SK-N-SH (cell line): ENCODE measurements at regions of chr21 and their contacts with region 1.

Region 1: DNA sequence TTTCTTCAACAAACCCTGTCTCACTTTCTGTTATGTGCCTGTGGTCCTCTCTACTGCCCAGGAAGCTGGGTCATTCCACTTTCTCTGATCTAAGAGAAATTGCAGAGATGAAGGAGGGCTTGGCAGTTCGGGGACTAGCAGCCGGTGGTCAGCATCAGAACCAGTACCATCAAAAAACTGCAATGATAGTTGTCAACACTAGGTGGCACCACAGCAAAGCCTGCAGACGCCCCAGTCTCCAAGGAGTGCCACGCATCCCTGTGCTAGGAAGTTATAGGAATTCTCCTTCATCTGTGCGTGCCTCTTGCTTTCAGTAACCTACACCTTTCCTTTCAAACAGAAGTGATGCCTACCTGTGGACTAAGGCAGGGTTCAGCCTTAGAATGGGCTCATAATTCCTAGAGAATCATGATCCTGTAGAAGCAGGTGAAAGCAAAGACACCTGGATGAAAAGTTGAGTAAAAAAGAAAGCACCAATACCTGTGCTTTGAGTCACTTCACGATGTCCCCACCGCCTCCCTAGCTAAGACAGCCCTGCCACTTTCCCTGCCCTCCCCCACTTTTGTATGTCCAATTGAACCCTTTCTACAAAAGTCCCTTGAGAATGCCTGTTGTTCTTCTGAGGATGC is 129.2 kb downstream of the ADAMTS1 start:
- DNase-seq: peak; percentile 48
- H3K4me3 ChIP-seq: no peak overlapping the region
- H3K27ac ChIP-seq: no peak overlapping the region
- H3K4me1 ChIP-seq: no peaks in the 10 kb centered on the region
- H3K27me3 ChIP-seq: no peaks in the 10 kb centered on the region
- CTCF ChIP-seq: peak; percentile 79
- EP300 ChIP-seq: no peak
- RAD21 ChIP-seq: peak; percentile 58

Region 2: GRCh38 chr21:25881525-25882376 is 834.2 kb before region 1 on chr21:
- CTCF ChIA-PET with region 1: interaction called, 10 read pairs
- POLR2A ChIA-PET with region 1: no interaction called
- DNase-seq: peak; percentile 64
- H3K4me3 ChIP-seq: peak overlapping the region in 1 of 2 experiments; percentile 17; a peak in 2 of 4 replicates
- H3K27ac ChIP-seq: no peak overlapping the region; a peak in 1 of 4 replicates
- H3K4me1 ChIP-seq: no peaks in the 10 kb centered on the region
- H3K27me3 ChIP-seq: no peaks in the 10 kb centered on the region
- CTCF ChIP-seq: peak; percentile 97
- EP300 ChIP-seq: no peak
- RAD21 ChIP-seq: peak; percentile 87

Region 3: GRCh38 chr21:26732432-26733221 is 16.6 kb after region 1 on chr21:
- CTCF ChIA-PET with region 1: interaction called, 11 read pairs
- POLR2A ChIA-PET with region 1: interaction called, 3 read pairs
- DNase-seq: peak; percentile 14
- H3K4me3 ChIP-seq: no peak overlapping the region; a peak in 1 of 4 replicates
- H3K27ac ChIP-seq: no peak overlapping the region
- H3K4me1 ChIP-seq: peaks cover 0 to 3% of the 10 kb centered on the region in 2 experiments; a peak in 1 of 4 replicates
- H3K27me3 ChIP-seq: 0 out of 2 replicates have a peak, but pooled peaks cover 4% of the 10 kb centered on the region
- CTCF ChIP-seq: peak; percentile 64
- EP300 ChIP-seq: no peak
- RAD21 ChIP-seq: peak; percentile 47

Region 4: DNA sequence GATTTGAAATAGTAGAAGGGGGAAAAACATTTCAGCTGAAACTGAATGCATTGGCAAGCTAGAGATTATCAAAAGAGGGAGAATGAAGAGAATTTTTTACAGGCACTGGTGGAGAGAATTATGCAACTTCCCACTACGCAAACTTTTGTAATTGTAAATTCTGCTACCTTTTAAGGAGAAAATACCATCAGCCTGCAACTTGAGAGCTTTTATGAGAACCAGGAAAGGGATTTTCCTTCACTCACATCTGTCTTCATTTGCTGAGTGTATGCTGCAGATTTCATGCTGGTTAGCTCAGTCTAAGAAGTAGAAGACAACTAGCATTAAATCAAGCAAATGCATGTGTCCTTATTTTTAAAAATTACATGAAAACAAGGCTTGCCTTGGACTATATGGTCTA is 85.5 kb after region 1 on chr21:
- CTCF ChIA-PET with region 1: no interaction called
- POLR2A ChIA-PET with region 1: no interaction called
- DNase-seq: no peak
- H3K4me3 ChIP-seq: no peak overlapping the region
- H3K27ac ChIP-seq: peak overlapping the region in 1 of 2 experiments; percentile 43; a peak in 1 of 4 replicates
- H3K4me1 ChIP-seq: peaks cover 0 to 5% of the 10 kb centered on the region in 2 experiments; a peak in 2 of 4 replicates
- H3K27me3 ChIP-seq: no peaks in the 10 kb centered on the region
- CTCF ChIP-seq: no peak
- EP300 ChIP-seq: no peak
- RAD21 ChIP-seq: no peak